B cell (primary cell): ENCODE measurements at regions of chr2 and their contacts with region 1.

Region 1: DNA sequence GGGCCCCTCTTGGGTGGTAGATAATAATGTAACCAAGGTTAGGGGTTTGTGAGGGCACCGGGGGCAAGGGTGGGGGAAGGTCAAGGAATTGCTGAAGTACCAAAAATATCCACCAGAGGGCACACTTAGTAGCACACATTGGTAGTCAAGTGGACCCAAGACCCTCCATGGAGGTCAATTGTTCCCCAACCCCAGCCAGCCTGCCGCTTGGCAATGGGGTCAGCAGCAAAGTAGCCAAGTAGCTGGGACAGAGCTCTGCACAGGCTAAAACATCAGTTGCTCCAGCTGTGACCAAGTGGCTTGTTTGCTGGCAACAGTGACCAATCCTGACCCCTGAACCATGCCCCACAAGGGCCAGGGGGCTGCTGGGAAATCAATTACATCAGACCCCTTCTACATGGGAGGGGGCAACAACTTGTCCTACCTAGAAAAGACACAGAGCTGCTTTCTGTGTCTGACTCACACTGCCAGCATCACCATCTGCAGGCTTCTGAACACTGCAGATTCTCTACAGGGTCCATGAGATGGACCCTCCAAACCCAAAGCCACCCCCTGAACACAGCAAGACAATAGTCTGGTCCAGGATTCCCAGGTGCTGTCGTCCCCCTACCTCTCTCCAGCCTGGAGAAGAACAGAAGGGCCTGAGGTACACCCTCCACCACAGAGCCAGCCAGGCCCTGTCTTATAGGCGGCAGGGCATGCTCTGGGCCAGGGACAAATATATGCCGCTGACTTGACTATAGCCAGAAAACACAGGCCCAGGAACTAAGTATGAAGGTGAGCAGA is 76.0 kb downstream of the EMX1 start:
- DNase-seq: peak; percentile 75
- ATAC-seq: peak; percentile 63
- H3K4me3 ChIP-seq: no peak overlapping the region
- H3K4me3 Mint-ChIP-seq: no peak overlapping the region
- H3K27ac ChIP-seq: no peak overlapping the region
- H3K27ac Mint-ChIP-seq: no peak overlapping the region
- H3K4me1 ChIP-seq: no peaks in the 10 kb centered on the region
- H3K4me1 Mint-ChIP-seq: no peaks in the 10 kb centered on the region
- H3K27me3 ChIP-seq: no peaks in the 10 kb centered on the region
- H3K27me3 Mint-ChIP-seq: no peaks in the 10 kb centered on the region
- CTCF ChIP-seq: peak; percentile 91

Region 2: GRCh38 chr2:73004889-73005596 is 11.7 kb after region 1 on chr2:
- CTCF ChIA-PET with region 1: interaction called, 13 read pairs
- POLR2A ChIA-PET with region 1: no interaction called
- intact Hi-C with region 1: no loop called
- DNase-seq: no peak
- ATAC-seq: no peak
- H3K4me3 ChIP-seq: no peak overlapping the region
- H3K4me3 Mint-ChIP-seq: no peak overlapping the region
- H3K27ac ChIP-seq: no peak overlapping the region
- H3K27ac Mint-ChIP-seq: no peak overlapping the region
- H3K4me1 ChIP-seq: no peaks in the 10 kb centered on the region
- H3K4me1 Mint-ChIP-seq: no peaks in the 10 kb centered on the region
- H3K27me3 ChIP-seq: no peaks in the 10 kb centered on the region
- H3K27me3 Mint-ChIP-seq: no peaks in the 10 kb centered on the region
- CTCF ChIP-seq: no peak

Region 3: DNA sequence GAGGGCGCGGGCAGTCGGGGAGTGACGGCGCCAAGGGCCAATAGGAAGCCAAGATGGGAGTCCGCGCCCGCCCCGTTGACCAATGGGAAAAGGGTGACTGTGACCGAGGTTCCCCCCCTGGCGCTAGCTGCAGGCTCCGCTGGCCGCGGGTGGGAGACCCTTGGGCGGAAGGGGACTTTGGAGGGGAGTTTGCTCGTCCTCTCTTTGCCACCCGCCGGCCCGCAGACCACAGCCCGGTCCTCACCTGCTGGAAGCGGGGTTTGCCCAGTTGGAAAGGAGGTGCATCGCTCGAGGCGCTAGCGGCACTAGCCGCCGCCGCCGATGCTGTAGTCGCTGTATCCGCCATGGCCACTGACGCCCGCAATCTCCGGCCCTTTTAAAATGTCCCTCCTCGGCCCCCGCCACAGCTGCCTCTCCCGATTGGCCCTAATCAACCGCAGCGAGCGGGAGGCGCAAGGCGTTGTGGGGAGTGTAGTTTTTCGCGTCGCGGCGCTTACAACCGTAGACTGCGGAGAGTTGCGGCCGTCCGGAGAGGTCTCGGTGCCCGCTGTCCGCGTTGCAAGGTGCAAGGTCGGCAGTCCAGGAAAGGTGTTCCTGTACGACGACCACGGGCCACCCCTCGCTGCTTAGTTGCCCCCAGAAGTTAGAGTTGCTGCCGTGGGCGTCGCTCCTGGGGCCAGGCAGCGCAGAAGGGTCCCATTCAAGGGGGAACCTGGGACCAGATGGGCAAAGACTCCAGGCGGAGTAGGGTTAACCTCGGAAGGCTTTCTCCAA is 78.2 kb after region 1 on chr2 and contains the start of gene SFXN5:
- CTCF ChIA-PET with region 1: no interaction called
- POLR2A ChIA-PET with region 1: no interaction called
- intact Hi-C with region 1: loop called (anchors 2 kb)
- DNase-seq: peak; percentile 98
- ATAC-seq: peak; percentile 90
- H3K4me3 ChIP-seq: peak within 1 kb of the TSS; percentile 51 to 99 (median 86)
- H3K4me3 Mint-ChIP-seq: peak within 1 kb of the TSS; percentile 93
- H3K27ac ChIP-seq: peak within 1 kb of the TSS; percentile 77 to 84
- H3K27ac Mint-ChIP-seq: peak within 1 kb of the TSS; percentile 95
- H3K4me1 ChIP-seq: peaks cover 6 to 17% of the 10 kb centered on the region in 2 donors
- H3K4me1 Mint-ChIP-seq: peaks cover 24% of the 10 kb centered on the region
- H3K27me3 ChIP-seq: no peaks in the 10 kb centered on the region
- H3K27me3 Mint-ChIP-seq: no peaks in the 10 kb centered on the region
- CTCF ChIP-seq: no peak
- total RNA-seq, gene SFXN5: 16.9 and 17.8 TPM in 2 replicates

Region 4: DNA sequence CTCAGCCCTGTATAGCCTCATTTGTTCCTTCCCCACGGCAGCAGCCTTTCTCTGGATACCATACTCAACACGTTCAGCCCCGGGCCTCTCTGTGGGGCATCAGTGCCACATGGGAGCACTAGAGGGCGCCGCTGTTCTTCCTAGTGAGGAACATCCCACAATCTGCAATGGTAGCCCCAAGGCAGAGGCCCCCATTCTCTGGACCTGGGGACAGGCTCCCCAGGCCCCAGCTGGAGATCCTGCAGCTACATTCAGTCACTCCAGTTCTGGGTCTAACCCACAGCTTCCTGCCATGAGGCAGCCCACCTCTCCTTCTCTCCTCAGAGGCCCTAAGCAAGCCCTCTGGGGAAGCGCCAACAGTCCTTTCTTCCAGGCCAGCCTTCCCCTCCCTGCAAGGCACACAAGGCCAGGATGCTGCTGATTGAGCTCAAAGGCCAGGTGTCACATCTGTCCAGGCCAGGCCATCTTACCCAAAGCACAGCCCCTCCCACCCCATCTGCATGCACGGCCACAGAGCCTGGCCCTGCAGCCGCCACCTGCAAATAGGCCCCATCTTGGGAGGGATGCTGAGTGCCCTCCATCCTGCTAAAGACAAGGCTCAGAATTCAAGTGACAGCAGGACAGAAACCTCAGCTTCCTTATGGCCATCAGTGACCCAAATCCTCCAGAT is 92.5 kb after region 1 on chr2:
- CTCF ChIA-PET with region 1: interaction called, 3 read pairs
- POLR2A ChIA-PET with region 1: no interaction called
- intact Hi-C with region 1: loop called (anchors 1 kb)
- DNase-seq: peak; percentile 80
- ATAC-seq: peak; percentile 90
- H3K4me3 ChIP-seq: no peak overlapping the region
- H3K4me3 Mint-ChIP-seq: no peak overlapping the region
- H3K27ac ChIP-seq: no peak overlapping the region
- H3K27ac Mint-ChIP-seq: no peak overlapping the region
- H3K4me1 ChIP-seq: no peaks in the 10 kb centered on the region
- H3K4me1 Mint-ChIP-seq: no peaks in the 10 kb centered on the region
- H3K27me3 ChIP-seq: peaks cover 0 to 4% (median 2%) of the 10 kb centered on the region in 4 experiments
- H3K27me3 Mint-ChIP-seq: peaks cover 11% of the 10 kb centered on the region
- CTCF ChIP-seq: peak; percentile 78

Region 5: GRCh38 chr2:73163483-73164367 is 170.4 kb after region 1 on chr2:
- CTCF ChIA-PET with region 1: interaction called, 32 read pairs
- POLR2A ChIA-PET with region 1: no interaction called
- intact Hi-C with region 1: no loop called
- DNase-seq: peak; percentile 71
- ATAC-seq: peak; percentile 84
- H3K4me3 ChIP-seq: no peak overlapping the region
- H3K4me3 Mint-ChIP-seq: no peak overlapping the region
- H3K27ac ChIP-seq: no peak overlapping the region
- H3K27ac Mint-ChIP-seq: no peak overlapping the region
- H3K4me1 ChIP-seq: no peaks in the 10 kb centered on the region
- H3K4me1 Mint-ChIP-seq: no peaks in the 10 kb centered on the region
- H3K27me3 ChIP-seq: peaks cover 0 to 3% (median 0%) of the 10 kb centered on the region in 4 experiments
- H3K27me3 Mint-ChIP-seq: peaks cover 24% of the 10 kb centered on the region
- CTCF ChIP-seq: peak; percentile 82

Region 6: GRCh38 chr2:73284296-73285158 is 291.2 kb after region 1 on chr2 and contains the start of gene FBXO41:
- CTCF ChIA-PET with region 1: no interaction called
- POLR2A ChIA-PET with region 1: no interaction called
- intact Hi-C with region 1: no loop called
- DNase-seq: peak; percentile 81
- ATAC-seq: peak; percentile 72
- H3K4me3 ChIP-seq: peak within 1 kb of the TSS; percentile 40 to 81 (median 75)
- H3K4me3 Mint-ChIP-seq: peak within 1 kb of the TSS; percentile 93
- H3K27ac ChIP-seq: peak within 1 kb of the TSS; percentile 80 to 81
- H3K27ac Mint-ChIP-seq: peak within 1 kb of the TSS; percentile 91
- H3K4me1 ChIP-seq: peaks cover 21 to 34% of the 10 kb centered on the region in 2 donors
- H3K4me1 Mint-ChIP-seq: peaks cover 32% of the 10 kb centered on the region
- H3K27me3 ChIP-seq: peaks cover 0 to 6% (median 0%) of the 10 kb centered on the region in 4 experiments
- H3K27me3 Mint-ChIP-seq: peaks cover 2% of the 10 kb centered on the region
- CTCF ChIP-seq: peak; percentile 3
- total RNA-seq, gene FBXO41: 23.7 and 25.2 TPM in 2 replicates